ENCODE measurements at regions of chr16 and their contacts with region 1.

Region 1: GRCh38 chr16:69796351-69797118 is 34.4 kb downstream of the WWP2 start:
- DNase-seq: peak; percentile 74
- ATAC-seq: peak; percentile 85
- H3K4me3 ChIP-seq: no peak overlapping the region
- H3K27ac ChIP-seq: no peak overlapping the region
- H3K4me1 ChIP-seq: peaks cover 5% of the 10 kb centered on the region
- H3K27me3 ChIP-seq: no peaks in the 10 kb centered on the region; a peak in 1 of 5 replicates
- CTCF ChIP-seq: peak; percentile 94
- EP300 ChIP-seq: no peak
- POLR2A ChIP-seq: no peak
- RAD21 ChIP-seq: peak; percentile 96

Region 2: DNA sequence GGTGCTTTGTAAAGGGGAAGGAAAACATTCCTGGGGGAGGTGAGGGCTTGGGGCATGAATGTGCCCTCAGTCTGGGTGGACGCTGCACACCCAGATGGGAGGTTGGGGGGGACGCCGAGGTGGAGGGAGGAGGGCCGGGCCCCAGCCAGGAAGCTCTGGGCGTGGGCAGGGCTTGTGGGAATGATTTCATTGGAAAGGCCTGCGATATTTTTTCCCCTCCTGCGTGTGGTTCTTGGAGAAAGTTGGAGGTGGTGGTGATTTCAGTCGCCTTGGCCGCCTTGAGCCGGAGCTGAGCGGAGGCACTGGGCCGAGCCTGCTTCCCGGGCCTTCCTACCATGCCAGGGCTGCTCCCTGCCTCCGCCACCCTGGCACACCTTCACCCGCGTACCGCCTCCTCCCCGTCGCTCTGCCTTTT is 128.2 kb after region 1 on chr16:
- CTCF ChIA-PET with region 1: interaction called, 64 read pairs
- POLR2A ChIA-PET with region 1: no interaction called
- in situ Hi-C with region 1: loop called (anchors 5 kb)
- intact Hi-C with region 1: no loop called
- DNase-seq: peak; percentile 63
- ATAC-seq: no peak
- H3K4me3 ChIP-seq: no peak overlapping the region
- H3K27ac ChIP-seq: no peak overlapping the region
- H3K4me1 ChIP-seq: peaks cover 41% of the 10 kb centered on the region
- H3K27me3 ChIP-seq: no peaks in the 10 kb centered on the region
- CTCF ChIP-seq: no peak
- EP300 ChIP-seq: no peak
- POLR2A ChIP-seq: no peak
- RAD21 ChIP-seq: no peak

Region 3: GRCh38 chr16:69930117-69930776 is 133.7 kb after region 1 on chr16:
- CTCF ChIA-PET with region 1: interaction called, 64 read pairs
- POLR2A ChIA-PET with region 1: no interaction called
- in situ Hi-C with region 1: loop called (anchors 5 kb)
- intact Hi-C with region 1: loop called (anchors 1 kb)
- DNase-seq: peak; percentile 76
- ATAC-seq: peak; percentile 92
- H3K4me3 ChIP-seq: no peak overlapping the region
- H3K27ac ChIP-seq: no peak overlapping the region
- H3K4me1 ChIP-seq: peaks cover 30% of the 10 kb centered on the region
- H3K27me3 ChIP-seq: no peaks in the 10 kb centered on the region
- CTCF ChIP-seq: peak; percentile 94
- EP300 ChIP-seq: no peak
- POLR2A ChIP-seq: no peak
- RAD21 ChIP-seq: peak; percentile 92

Measured in HepG2 (cell line).